ENCODE measurements at regions of chr7 and their contacts with region 1.

Region 1: DNA sequence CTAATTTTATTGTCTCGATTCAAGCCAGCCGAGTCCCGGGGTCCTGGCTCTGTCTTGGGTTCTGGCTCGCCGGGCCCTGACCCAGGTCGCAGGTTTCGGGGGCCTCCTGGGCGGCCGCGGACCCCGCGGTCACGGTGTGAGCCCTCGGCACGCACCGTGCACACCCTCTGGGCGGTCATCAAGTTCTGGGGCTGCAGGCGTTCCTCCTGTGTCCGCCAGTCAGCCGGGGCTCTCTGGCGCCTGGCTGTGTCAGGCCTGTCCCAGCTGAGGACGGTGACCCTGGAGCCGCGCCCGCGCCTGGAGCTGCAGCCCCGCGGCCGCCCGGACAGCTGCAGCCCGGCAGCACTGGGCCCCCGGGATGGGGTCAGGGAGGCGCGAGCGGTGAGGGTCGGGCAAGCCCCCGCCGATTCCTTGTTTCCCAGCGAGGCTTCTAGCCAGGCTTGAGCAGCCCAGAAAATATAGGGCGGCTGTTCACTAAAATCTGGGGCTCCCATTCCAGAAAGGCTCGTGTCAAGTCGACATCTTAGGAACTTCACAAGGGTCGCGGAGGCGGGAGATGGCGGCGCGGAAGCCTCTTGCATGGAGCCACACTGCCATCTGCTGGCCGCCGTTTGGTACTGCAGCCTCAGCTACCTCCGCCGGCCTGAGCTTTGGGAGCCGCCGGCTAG is 4.2 kb upstream of the HOXA7 start:
- DNase-seq: peak; percentile 94
- H3K4me3 ChIP-seq: peak overlapping the region; percentile 38 to 85 (median 82)
- H3K27ac ChIP-seq: peak overlapping the region in 3 of 4 donors; percentile 97 to 98 (median 98)
- H3K4me1 ChIP-seq: peaks cover 0 to 44% (median 40%) of the 10 kb centered on the region in 4 donors
- H3K27me3 ChIP-seq: no peaks in the 10 kb centered on the region
- CTCF ChIP-seq: peak; percentile 98 to 100 (median 99)
- EP300 ChIP-seq: no peak
- POLR2A ChIP-seq: no peak

Region 2: DNA sequence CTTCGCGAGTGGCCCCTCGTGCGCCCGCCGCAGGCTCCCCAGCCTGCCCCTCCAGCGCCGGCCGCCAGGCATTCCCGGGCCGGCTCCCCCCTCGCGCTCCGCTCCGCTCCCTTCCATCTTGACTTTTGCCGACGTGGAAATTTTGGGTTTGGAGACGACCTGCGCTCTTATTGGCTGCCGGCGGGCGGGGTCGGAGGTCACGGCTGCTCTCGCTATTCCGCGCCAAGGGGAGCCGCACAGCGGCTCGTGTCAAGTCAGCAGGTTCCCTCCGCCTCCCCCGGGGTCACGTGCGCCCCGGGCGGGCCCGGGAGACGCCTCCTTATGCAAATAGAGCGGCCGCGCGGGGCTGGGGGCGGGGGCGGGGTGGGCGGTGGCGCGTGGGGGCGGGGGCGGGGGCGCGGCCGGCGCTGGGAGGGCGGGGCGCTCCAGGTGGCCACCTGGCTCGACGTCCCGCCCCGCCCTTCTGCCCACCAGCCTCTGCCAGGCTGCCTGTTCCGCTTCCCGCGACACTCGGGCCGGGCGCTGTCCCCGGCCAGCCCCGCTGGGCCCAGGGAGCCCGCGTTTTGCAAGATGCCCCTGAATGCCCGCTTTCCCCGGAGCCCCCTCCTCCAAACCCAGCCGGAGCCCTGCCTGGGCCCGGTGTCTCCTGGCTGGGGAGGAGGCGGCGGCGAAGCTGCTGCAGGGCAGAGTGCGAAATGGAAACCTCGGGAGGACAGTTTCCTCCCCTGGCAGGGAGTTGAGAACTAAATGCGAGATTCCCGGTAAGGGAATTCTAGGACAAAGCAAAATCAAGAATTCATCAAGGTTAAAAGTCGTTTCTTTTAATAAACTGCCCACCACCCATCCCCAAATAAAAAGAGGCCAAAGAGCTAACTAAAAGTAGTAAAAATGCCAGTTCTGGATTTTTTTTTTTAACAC is 1209.4 kb before region 1 on chr7:
- intact Hi-C with region 1: loop called (anchors 5 kb)
- DNase-seq: peak; percentile 95
- H3K4me3 ChIP-seq: peak overlapping the region; percentile 38 to 75 (median 62)
- H3K27ac ChIP-seq: peak overlapping the region; percentile 29 to 67 (median 60)
- H3K4me1 ChIP-seq: peaks cover 0 to 18% (median 16%) of the 10 kb centered on the region in 4 donors
- H3K27me3 ChIP-seq: peaks cover 0 to 5% (median 0%) of the 10 kb centered on the region in 3 donors
- CTCF ChIP-seq: no peak
- EP300 ChIP-seq: no peak
- POLR2A ChIP-seq: peak in 1 of 2 donors; percentile 62

Region 3: DNA sequence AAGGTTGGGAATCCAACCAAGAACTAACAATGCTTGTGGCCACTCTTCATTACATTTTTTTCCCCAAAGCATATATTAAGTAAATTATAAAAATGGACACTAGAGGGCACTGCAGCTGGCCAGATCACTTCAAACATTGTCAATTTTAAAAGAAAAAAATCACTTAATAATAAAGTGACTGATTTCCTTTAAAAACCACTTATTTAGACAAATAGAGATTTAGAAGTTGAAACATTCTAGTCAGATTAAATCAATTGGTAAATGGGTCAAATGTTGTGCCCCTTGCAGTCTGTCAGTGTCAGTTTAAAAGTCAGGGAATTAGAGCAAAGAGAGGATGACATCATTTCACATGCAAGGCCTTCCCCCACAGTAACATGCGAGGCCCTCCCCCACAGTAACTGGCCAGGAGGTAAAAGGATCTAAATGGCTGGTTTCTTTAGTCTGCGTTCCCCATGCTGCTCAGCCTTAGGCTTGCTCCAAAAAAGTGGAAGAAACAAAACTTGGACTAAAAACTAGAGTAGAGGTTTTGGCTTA is 474.2 kb before region 1 on chr7:
- intact Hi-C with region 1: loop called (anchors 2 kb)
- DNase-seq: peak; percentile 66
- H3K4me3 ChIP-seq: no peak overlapping the region
- H3K27ac ChIP-seq: peak overlapping the region in 3 of 4 donors; percentile 22 to 45 (median 39)
- H3K4me1 ChIP-seq: peaks cover 0 to 13% (median 0%) of the 10 kb centered on the region in 4 donors
- H3K27me3 ChIP-seq: no peaks in the 10 kb centered on the region
- CTCF ChIP-seq: peak; percentile 35 to 73 (median 57)
- EP300 ChIP-seq: no peak
- POLR2A ChIP-seq: no peak

Region 4: GRCh38 chr7:26853788-26854393 is 306.8 kb before region 1 on chr7:
- intact Hi-C with region 1: loop called (anchors 5 kb)
- DNase-seq: no peak
- H3K4me3 ChIP-seq: no peak overlapping the region
- H3K27ac ChIP-seq: no peak overlapping the region
- H3K4me1 ChIP-seq: no peaks in the 10 kb centered on the region
- H3K27me3 ChIP-seq: no peaks in the 10 kb centered on the region
- CTCF ChIP-seq: peak in 3 of 4 experiments; percentile 52 to 61 (median 57)
- EP300 ChIP-seq: no peak
- POLR2A ChIP-seq: no peak

Region 5: GRCh38 chr7:26965724-26966123 is 195.0 kb before region 1 on chr7:
- intact Hi-C with region 1: no loop called
- DNase-seq: no peak
- H3K4me3 ChIP-seq: no peak overlapping the region
- H3K27ac ChIP-seq: no peak overlapping the region
- H3K4me1 ChIP-seq: no peaks in the 10 kb centered on the region
- H3K27me3 ChIP-seq: no peaks in the 10 kb centered on the region
- CTCF ChIP-seq: no peak
- EP300 ChIP-seq: no peak
- POLR2A ChIP-seq: no peak

Region 6: GRCh38 chr7:27080844-27081436 is 79.7 kb before region 1 on chr7:
- intact Hi-C with region 1: no loop called
- DNase-seq: no peak
- H3K4me3 ChIP-seq: no peak overlapping the region
- H3K27ac ChIP-seq: no peak overlapping the region
- H3K4me1 ChIP-seq: no peaks in the 10 kb centered on the region
- H3K27me3 ChIP-seq: no peaks in the 10 kb centered on the region
- CTCF ChIP-seq: no peak
- EP300 ChIP-seq: no peak
- POLR2A ChIP-seq: no peak

Region 7: DNA sequence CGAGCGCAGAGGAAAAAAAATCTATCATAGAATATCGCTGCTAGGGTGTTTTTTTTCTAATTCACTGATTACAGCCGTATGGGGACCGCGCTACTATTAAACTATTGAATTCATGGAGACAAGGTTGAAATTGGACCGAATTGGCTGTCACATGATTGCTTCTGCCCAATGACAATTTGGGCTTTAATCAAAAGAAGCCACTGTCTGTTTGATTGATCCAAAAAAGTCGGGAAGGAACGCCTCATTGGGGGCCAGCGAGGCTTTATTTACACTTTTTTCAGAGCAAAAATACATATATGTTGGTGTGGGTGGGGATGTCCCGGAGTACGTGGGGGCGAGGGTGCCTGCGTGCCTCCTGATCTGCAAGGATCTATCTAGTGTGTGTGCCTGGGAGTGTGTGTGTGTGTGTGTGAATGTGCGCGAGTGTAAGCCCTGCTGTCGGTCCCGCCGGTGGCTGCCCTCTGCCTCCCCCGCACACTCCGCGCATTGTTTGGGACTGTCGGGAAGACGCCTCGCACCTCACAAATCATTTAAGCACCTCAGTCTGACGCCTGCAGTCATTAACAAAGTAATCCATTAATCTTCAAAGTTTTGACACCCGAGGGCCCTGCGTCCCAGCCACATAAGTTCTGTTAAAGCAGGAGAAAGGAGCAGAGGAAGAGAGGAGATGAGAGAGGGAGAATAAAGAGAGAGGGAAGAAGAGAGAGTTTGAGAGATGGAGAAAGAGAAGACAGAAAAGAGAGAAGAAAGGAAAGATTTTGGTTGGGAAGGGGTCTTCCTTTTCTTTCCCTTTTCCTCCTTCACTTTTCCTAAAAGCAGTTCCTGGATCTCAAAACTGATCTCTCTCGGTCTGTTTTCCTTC is 57.9 kb before region 1 on chr7 and contains the start of gene HOXA2:
- intact Hi-C with region 1: loop called (anchors 5 kb)
- DNase-seq: peak; percentile 78
- H3K4me3 ChIP-seq: peak within 1 kb of the TSS; percentile 34 to 53 (median 44)
- H3K27ac ChIP-seq: peak within 1 kb of the TSS; percentile 93 to 99 (median 94)
- H3K4me1 ChIP-seq: peaks cover 0 to 57% (median 22%) of the 10 kb centered on the region in 4 donors
- H3K27me3 ChIP-seq: no peaks in the 10 kb centered on the region
- CTCF ChIP-seq: no peak
- EP300 ChIP-seq: no peak
- POLR2A ChIP-seq: peak in 1 of 2 donors; percentile 15
- total RNA-seq, gene HOXA2: 1.6 to 4.3 (median 3.2) TPM

Region 8: GRCh38 chr7:27339478-27339877 is 178.8 kb after region 1 on chr7:
- intact Hi-C with region 1: no loop called
- DNase-seq: no peak
- H3K4me3 ChIP-seq: no peak overlapping the region
- H3K27ac ChIP-seq: no peak overlapping the region
- H3K4me1 ChIP-seq: no peaks in the 10 kb centered on the region
- H3K27me3 ChIP-seq: no peaks in the 10 kb centered on the region
- CTCF ChIP-seq: no peak
- EP300 ChIP-seq: no peak
- POLR2A ChIP-seq: no peak

Measured in sigmoid colon (tissue), 7 donors.